Activated CD8-positive, alpha-beta memory T cell treated with anti-CD3 and anti-CD28 coated beads, Interleukin-2, amount 10 ng/mL, durations not matched to agents 7 days and 5 days (primary cell): ENCODE measurements at regions of chr13 and their contacts with region 1.

Region 1: GRCh38 chr13:102784501-102784900 is 10.9 kb upstream of the TEX30 start:
- DNase-seq: no peak
- ATAC-seq: no peak
- H3K4me3 Mint-ChIP-seq: no peak overlapping the region
- H3K27ac Mint-ChIP-seq: no peak overlapping the region
- H3K4me1 Mint-ChIP-seq: peaks cover 14% of the 10 kb centered on the region
- H3K27me3 Mint-ChIP-seq: no peaks in the 10 kb centered on the region

Region 2: DNA sequence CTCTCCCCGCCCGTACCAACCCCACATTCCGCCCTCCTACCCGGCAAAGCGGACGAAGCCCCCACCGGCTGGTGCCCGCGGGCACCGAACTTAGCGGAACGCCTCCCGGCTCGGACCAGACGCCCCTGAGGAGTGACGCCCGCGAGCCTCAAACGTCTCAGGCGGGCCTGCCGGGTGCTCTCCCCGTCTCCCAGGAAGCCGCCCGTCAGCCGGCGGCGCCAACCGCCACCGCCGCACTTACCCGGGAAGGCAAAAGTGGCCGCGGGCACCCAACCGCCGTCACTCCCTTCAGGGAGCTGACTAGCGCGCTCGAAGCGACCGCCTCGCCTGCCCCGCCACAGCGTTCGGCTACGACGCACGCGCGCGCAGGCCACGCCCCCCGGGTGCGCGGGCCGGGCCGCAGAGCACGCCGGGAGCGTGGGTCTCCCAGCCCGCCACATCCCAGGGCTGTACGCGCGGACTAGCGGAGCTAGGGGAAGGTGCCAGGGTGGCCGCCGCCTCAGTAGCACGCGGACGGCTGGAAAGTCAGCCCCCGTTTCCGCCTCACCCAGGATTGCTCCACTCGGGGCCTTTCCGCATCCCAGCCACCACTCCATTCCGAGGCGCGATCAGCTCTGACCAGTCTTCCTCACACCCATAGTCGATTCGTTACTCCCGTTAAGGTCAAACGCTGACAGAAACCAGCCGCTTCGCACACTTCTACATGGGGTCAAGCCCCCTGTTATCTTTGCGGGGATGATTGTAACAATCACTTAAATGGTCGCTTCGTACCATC is 10.9 kb before region 1 on chr13 and contains the start of gene TEX30:
- CTCF ChIA-PET with region 1: interaction called, 13 read pairs
- DNase-seq: peak; percentile 89
- ATAC-seq: peak; percentile 95
- H3K4me3 Mint-ChIP-seq: peak within 1 kb of the TSS; percentile 93
- H3K27ac Mint-ChIP-seq: peak within 1 kb of the TSS; percentile 96
- H3K4me1 Mint-ChIP-seq: peaks cover 54% of the 10 kb centered on the region
- H3K27me3 Mint-ChIP-seq: no peaks in the 10 kb centered on the region
- total RNA-seq, gene TEX30: 32.4 to 69.5 TPM

Region 3: DNA sequence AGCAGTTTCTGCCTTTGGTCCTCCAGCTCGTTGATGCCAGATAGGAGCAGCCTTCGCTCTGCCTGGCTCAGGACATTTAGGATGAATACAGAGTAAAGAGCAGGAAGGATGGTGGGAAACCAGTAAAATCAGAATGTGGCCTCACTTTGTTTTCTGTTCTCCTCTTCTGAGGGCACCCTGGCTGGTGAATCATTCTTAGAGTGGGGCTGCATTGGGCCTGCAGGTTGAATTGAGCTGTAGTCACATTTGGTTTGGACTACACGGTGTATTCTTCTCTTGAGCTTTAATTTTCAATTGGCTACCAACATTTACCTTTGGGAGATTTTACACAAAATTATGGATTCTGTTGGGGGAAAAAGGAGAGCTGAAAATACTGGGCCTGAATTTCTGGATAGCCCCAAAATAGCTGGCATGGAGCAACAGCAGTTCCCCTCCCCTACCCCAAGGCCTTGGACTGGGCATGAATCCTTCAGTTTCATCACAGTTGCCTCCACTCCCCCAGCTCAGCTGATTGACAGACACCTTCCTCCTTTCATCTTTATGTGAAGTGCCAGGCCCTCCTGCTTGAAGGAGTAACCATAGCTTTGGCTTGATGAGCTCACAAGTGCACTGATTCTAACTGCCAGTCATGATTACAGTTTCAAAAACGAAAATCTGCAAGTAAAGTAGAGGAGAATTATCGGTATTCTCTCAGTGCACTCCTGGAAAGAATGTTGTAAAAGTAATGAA is 85.6 kb after region 1 on chr13:
- CTCF ChIA-PET with region 1: no interaction called
- DNase-seq: no peak
- ATAC-seq: peak; percentile 10
- H3K4me3 Mint-ChIP-seq: no peak overlapping the region
- H3K27ac Mint-ChIP-seq: peak overlapping the region; percentile 54
- H3K4me1 Mint-ChIP-seq: peaks cover 40% of the 10 kb centered on the region
- H3K27me3 Mint-ChIP-seq: no peaks in the 10 kb centered on the region